Spleen (tissue), 13 donors: ENCODE measurements at regions of chr19 and their contacts with region 1.

Region 1: GRCh38 chr19:23686621-23687423 is at the start of gene ZNF675:
- DNase-seq: peak; percentile 95
- H3K4me3 ChIP-seq: peak within 1 kb of the TSS; percentile 73 to 95 (median 84)
- H3K27ac ChIP-seq: peak within 1 kb of the TSS; percentile 80 to 91 (median 88)
- H3K4me1 ChIP-seq: peaks cover 13 to 52% (median 30%) of the 10 kb centered on the region in 6 donors
- H3K27me3 ChIP-seq: no peaks in the 10 kb centered on the region
- CTCF ChIP-seq: no peak
- POLR2A ChIP-seq: no peak
- total RNA-seq, gene ZNF675: 16.4 to 38.8 (median 21.3) TPM

Region 2: DNA sequence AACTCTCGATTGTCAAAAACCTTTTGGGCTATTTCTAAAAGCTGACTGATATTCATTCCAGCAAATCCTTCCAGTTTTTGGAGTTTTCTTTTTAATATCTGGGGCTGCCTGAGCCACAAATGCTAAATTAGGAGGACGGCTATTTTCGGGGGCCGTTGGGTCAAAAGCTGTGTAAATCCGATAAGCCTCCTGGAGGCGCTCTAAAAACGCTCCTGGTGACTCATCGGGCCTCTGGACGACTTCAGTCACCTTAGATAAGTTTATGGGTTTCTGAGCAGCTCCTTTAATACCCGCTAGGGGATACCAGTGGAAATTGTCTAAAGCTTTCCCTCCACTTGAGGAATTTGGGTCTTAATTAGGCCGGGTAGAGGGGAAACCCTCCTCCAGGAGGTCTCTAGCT is 503.6 kb before region 1 on chr19:
- intact Hi-C with region 1: no loop called
- DNase-seq: no peak
- H3K4me3 ChIP-seq: no peak overlapping the region
- H3K27ac ChIP-seq: no peak overlapping the region
- H3K4me1 ChIP-seq: no peaks in the 10 kb centered on the region
- H3K27me3 ChIP-seq: no peaks in the 10 kb centered on the region
- CTCF ChIP-seq: no peak
- POLR2A ChIP-seq: no peak

Region 3: DNA sequence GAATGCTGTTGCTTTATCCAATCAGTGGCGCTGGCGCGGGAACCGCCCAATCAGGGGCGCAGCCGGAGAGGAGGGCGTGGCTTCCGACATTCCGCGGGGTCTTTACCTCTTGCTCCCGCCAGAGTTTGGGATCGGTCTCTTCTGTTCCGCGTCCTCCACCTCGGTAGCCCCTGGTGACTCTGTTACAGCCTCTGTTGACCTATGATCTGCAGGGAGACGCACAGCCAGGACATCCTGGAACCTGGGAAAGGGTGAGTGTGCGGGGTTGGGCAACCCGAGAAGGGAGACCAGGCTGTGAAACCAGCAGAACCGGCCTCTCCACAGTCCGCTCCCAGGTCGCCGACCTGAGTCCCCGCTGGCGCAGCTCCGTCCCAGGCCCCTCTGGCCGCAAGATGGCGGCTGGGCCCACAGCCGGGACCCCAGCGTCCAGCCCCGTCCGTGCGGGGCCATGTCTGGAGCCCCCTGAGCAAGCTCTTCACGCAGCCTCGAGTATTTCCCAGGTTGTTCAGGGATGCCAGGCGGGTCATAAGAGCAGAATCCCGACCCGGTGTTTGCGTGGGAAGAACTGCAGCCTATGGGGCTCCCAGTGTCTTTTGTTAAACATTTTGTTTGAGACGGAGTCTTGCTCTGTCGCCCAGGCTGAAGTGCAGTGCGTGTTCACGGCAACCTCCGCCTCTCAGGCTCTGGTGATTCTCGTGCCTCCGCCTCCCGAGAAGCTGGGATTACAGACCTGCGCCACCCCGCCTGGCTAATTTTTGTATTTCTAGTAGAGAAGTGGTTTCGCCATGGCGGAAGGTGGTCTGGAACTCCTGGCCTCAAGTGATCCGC is 76.3 kb after region 1 on chr19:
- intact Hi-C with region 1: loop called (anchors 10 kb)
- DNase-seq: peak; percentile 91
- H3K4me3 ChIP-seq: peak overlapping the region; percentile 60 to 88 (median 82)
- H3K27ac ChIP-seq: peak overlapping the region; percentile 9 to 78 (median 70)
- H3K4me1 ChIP-seq: peaks cover 0 to 30% (median 15%) of the 10 kb centered on the region in 6 donors
- H3K27me3 ChIP-seq: no peaks in the 10 kb centered on the region
- CTCF ChIP-seq: peak in 1 of 11 experiments; percentile 18
- POLR2A ChIP-seq: no peak